ENCODE measurements at regions of chr12 and their contacts with region 1.

Region 1: DNA sequence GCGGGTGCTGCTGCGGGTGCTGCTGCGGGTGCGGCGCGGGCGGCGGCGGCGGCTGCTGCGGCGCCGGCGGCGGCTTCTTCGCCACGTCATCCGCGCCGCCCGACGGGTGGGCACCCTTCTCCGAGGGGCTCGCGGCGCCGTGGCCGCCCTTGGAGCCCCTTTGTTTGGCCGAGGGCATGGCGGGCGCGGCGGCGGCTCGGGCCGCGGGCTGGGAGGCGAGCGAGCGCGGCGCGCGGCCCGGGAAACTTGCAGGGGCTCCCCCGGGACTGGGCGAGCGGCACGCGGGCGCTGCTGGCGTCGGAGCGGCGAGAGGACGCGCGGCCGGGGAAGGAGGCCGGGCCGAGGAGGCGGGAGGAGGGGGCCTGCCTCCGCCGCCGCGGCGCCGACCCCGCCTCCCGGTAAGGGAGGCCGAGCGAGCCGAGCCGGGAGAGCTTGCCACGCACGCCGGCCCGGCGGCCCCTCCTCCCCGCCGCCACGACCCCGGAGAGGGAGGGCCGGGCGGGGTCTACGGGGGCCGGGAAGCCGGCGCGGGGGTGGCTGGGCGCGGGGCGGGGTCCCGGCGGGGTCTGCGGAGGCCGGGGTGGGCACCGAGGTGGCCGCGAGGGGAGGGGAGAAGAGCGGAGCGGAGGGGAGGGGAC is at the start of gene CKAP4:
- DNase-seq: peak; percentile 60
- H3K4me3 Mint-ChIP-seq: peak within 1 kb of the TSS; percentile 75
- H3K27ac Mint-ChIP-seq: peak within 1 kb of the TSS; percentile 85
- H3K4me1 Mint-ChIP-seq: peaks cover 24% of the 10 kb centered on the region
- H3K27me3 Mint-ChIP-seq: no peaks in the 10 kb centered on the region
- total RNA-seq, gene CKAP4: 19.0 to 19.1 TPM

Region 2: DNA sequence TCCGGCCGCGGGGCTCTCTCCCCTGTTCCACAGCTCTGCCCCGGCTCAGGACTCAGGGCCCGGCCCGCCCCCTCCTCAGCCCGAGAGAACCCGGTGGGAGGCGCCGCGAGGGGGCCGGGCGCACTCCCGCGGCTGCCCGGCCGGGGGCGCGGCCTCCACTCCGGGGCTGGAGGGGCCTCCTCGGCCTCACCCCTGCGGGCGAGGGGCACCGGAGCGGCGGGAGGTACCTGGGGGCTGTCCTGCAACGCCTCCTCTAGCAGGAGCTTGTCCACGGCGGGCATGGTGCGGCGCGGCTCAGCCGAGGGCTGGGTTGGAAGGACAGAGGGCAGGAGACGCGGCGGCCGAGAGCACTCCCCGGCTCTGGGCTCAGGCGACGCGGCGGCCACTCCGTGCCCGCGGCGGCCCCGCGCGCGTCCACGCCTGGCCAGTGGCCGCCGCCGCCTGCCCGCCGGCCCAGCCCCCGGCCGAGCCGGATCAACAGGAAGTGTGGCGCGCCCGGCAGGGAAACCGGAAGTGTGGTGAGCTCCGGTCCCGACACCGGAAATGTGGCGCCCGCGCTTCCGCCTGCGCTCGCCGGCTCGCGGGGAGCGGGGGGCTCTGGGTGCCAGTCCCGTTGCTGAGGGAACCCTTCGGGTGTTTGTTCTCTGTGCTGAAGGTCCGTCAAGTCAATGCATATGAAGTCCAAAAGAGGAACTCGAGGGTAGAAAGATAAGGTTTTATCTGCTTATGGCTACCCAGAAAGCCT is 1011.9 kb before region 1 on chr12 and contains the start of gene APPL2:
- CTCF ChIA-PET with region 1: no interaction called
- intact Hi-C with region 1: loop called (anchors 5 kb)
- DNase-seq: peak; percentile 86
- H3K4me3 Mint-ChIP-seq: peak within 1 kb of the TSS; percentile 85
- H3K27ac Mint-ChIP-seq: peak within 1 kb of the TSS; percentile 86
- H3K4me1 Mint-ChIP-seq: peaks cover 37% of the 10 kb centered on the region
- H3K27me3 Mint-ChIP-seq: no peaks in the 10 kb centered on the region
- total RNA-seq, gene APPL2: 12.7 to 13.5 TPM

Region 3: DNA sequence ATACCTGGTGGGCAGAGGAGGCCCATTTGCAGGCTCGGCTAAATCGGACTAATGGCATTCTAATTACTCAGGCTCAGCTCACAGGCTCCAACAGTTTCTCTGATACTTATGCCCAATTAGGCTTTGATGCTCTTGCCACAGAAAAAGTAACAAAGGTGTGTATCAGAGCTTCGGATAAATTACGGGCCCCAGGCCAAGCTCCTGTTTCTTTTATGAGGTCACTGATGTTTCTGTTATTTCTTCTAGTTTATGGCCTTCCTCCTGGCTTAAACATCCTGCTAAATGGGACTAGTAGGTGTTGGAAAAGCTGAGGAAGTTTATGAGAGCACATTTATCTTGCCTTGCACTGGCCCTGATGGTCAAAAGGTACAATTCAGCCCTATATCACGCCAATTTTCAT is 946.1 kb before region 1 on chr12:
- CTCF ChIA-PET with region 1: no interaction called
- intact Hi-C with region 1: no loop called
- DNase-seq: no peak
- H3K4me3 Mint-ChIP-seq: no peak overlapping the region
- H3K27ac Mint-ChIP-seq: no peak overlapping the region
- H3K4me1 Mint-ChIP-seq: no peaks in the 10 kb centered on the region
- H3K27me3 Mint-ChIP-seq: no peaks in the 10 kb centered on the region

Region 4: GRCh38 chr12:106282457-106283097 is 34.8 kb after region 1 on chr12:
- CTCF ChIA-PET with region 1: interaction called, 21 read pairs
- intact Hi-C with region 1: loop called (anchors 1 kb)
- DNase-seq: peak; percentile 69
- H3K4me3 Mint-ChIP-seq: no peak overlapping the region
- H3K27ac Mint-ChIP-seq: no peak overlapping the region
- H3K4me1 Mint-ChIP-seq: peaks cover 14% of the 10 kb centered on the region
- H3K27me3 Mint-ChIP-seq: peaks cover 4% of the 10 kb centered on the region

Region 5: DNA sequence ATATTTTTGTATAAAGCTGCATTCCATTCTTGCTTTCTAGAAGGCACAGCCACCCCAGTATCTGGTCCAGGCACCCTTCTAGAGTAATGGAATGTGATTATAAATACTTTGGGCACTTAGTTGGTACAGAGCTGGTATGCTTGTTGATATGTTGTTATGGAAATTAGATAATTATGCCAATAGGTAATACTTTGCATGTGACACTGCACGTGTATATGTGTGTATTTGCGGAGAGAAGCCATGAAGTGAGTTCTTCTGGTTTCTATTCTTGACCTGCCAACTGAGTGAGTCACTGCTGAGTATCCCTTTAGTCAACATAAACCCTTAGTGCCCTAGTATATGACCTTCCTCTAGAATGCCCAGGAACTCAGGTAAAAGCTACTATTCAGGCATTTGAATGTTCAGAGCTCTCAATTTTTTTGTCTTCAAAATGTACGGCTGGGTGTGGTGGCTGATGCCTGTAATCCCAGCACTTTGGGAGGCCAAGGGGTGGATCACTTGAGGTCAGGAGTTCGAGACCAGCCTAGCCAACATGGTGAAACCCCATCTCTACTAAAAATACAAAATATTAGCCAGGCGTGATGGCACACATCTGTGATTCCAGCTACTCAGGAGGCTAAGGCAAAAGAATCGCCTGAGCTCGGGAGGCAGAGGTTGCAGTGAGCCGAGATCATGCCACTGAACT is 48.5 kb after region 1 on chr12:
- CTCF ChIA-PET with region 1: no interaction called
- intact Hi-C with region 1: no loop called
- DNase-seq: no peak
- H3K4me3 Mint-ChIP-seq: no peak overlapping the region
- H3K27ac Mint-ChIP-seq: no peak overlapping the region
- H3K4me1 Mint-ChIP-seq: peaks cover 12% of the 10 kb centered on the region
- H3K27me3 Mint-ChIP-seq: no peaks in the 10 kb centered on the region

Region 6: GRCh38 chr12:106357549-106358395 is 110.0 kb after region 1 on chr12 and contains the start of gene POLR3B:
- CTCF ChIA-PET with region 1: no interaction called
- intact Hi-C with region 1: loop called (anchors 1 kb)
- DNase-seq: peak; percentile 97
- H3K4me3 Mint-ChIP-seq: peak within 1 kb of the TSS; percentile 92
- H3K27ac Mint-ChIP-seq: peak within 1 kb of the TSS; percentile 89
- H3K4me1 Mint-ChIP-seq: peaks cover 11% of the 10 kb centered on the region
- H3K27me3 Mint-ChIP-seq: no peaks in the 10 kb centered on the region
- total RNA-seq, gene POLR3B: 6.4 to 6.8 TPM

Region 7: DNA sequence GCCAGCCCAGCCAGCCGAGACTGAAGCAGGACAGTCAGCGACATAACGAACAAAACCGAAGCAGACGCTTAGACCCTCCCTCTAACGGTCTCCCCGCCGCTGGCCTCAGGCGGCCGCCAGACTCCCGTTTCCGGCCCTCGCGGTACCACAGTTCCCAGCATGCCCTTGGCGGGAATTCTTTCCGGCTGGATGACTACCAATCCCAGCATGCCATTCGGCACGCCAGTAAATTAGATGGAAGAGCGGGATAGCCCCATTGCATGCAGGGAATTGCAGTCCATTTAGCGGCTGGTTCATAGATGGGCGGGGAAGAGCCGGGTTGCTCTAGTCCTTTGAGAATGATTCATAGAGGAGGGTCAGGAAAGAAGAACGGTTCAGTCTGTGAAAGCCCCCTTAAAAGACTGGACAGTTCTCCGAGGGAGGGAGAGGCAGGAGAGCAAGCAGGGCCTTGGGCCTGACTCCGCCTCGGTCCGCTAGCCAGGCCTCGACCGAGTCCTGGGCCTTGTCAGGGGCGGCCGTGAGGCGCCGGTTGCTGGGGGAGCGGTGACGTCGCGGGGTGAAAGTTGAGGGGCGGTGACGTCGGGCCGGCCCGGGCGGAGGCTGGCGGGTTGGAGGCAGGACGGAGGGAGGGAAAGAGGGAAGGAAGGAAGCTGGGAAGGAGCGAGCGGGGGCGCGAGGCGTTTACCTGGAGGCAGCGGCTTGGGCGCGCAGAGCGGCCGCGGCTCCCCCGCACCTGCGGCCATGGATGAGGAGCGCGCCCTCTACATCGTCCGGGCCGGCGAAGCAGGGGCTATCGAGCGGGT is 526.4 kb after region 1 on chr12 and contains the start of gene RIC8B:
- CTCF ChIA-PET with region 1: no interaction called
- intact Hi-C with region 1: loop called (anchors 10 kb)
- DNase-seq: peak; percentile 92
- H3K4me3 Mint-ChIP-seq: peak within 1 kb of the TSS; percentile 99
- H3K27ac Mint-ChIP-seq: peak within 1 kb of the TSS; percentile 97
- H3K4me1 Mint-ChIP-seq: peaks cover 22% of the 10 kb centered on the region
- H3K27me3 Mint-ChIP-seq: no peaks in the 10 kb centered on the region
- total RNA-seq, gene RIC8B: 7.3 to 8.1 TPM